ENCODE measurements at regions of chr6 and their contacts with region 1.

Region 1: DNA sequence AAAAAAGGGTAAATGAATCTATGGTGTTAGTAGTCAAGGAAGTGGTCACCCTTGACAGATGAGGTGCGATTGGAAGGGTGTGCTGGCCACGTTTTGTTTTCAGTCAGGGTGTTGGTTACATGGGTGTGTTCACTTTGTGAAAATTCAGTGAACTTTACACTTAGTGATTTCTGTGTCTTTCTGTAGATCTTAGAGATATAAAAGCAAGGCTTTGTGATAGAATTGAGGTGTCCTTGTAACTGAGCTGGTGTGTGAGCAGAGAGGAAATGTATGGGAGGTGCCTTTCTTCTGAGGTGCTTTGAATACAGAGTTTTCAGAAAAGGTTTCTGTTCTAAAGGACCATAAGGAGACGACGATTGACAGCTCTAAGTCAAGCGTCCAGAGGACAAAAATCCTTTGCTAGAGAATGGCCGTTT is 90.5 kb downstream of the SAMD3 start:
- DNase-seq: peak; percentile 24 to 92 (median 42)
- ATAC-seq: peak; percentile 85
- H3K4me3 ChIP-seq: peak overlapping the region; percentile 39
- H3K4me3 Mint-ChIP-seq: peak overlapping the region; percentile 71
- H3K27ac ChIP-seq: peak overlapping the region; percentile 64 to 75
- H3K27ac Mint-ChIP-seq: peak overlapping the region; percentile 90
- H3K4me1 ChIP-seq: peaks cover 36% of the 10 kb centered on the region
- H3K4me1 Mint-ChIP-seq: peaks cover 90% of the 10 kb centered on the region
- H3K27me3 ChIP-seq: no peaks in the 10 kb centered on the region
- H3K27me3 Mint-ChIP-seq: no peaks in the 10 kb centered on the region
- CTCF ChIP-seq: no peak

Region 2: GRCh38 chr6:130037207-130037811 is 95.0 kb before region 1 on chr6:
- CTCF ChIA-PET with region 1: no interaction called
- POLR2A ChIA-PET with region 1: no interaction called
- intact Hi-C with region 1: loop called in 1 of 2 experiments (anchors 10 kb)
- DNase-seq: peak in 3 of 14 experiments; percentile 36 to 60 (median 56)
- ATAC-seq: peak; percentile 73
- H3K4me3 ChIP-seq: no peak overlapping the region
- H3K4me3 Mint-ChIP-seq: no peak overlapping the region
- H3K27ac ChIP-seq: no peak overlapping the region
- H3K27ac Mint-ChIP-seq: no peak overlapping the region
- H3K4me1 ChIP-seq: peaks cover 11% of the 10 kb centered on the region
- H3K4me1 Mint-ChIP-seq: peaks cover 76% of the 10 kb centered on the region
- H3K27me3 ChIP-seq: no peaks in the 10 kb centered on the region
- H3K27me3 Mint-ChIP-seq: no peaks in the 10 kb centered on the region
- CTCF ChIP-seq: peak; percentile 74

Region 3: GRCh38 chr6:130065609-130066156 is 66.6 kb before region 1 on chr6:
- CTCF ChIA-PET with region 1: no interaction called
- POLR2A ChIA-PET with region 1: no interaction called
- intact Hi-C with region 1: no loop called
- DNase-seq: no peak
- ATAC-seq: no peak
- H3K4me3 ChIP-seq: no peak overlapping the region
- H3K4me3 Mint-ChIP-seq: no peak overlapping the region
- H3K27ac ChIP-seq: no peak overlapping the region
- H3K27ac Mint-ChIP-seq: no peak overlapping the region
- H3K4me1 ChIP-seq: peaks cover under 1% of the 10 kb centered on the region
- H3K4me1 Mint-ChIP-seq: peaks cover 3% of the 10 kb centered on the region
- H3K27me3 ChIP-seq: no peaks in the 10 kb centered on the region
- H3K27me3 Mint-ChIP-seq: no peaks in the 10 kb centered on the region
- CTCF ChIP-seq: no peak

Region 4: DNA sequence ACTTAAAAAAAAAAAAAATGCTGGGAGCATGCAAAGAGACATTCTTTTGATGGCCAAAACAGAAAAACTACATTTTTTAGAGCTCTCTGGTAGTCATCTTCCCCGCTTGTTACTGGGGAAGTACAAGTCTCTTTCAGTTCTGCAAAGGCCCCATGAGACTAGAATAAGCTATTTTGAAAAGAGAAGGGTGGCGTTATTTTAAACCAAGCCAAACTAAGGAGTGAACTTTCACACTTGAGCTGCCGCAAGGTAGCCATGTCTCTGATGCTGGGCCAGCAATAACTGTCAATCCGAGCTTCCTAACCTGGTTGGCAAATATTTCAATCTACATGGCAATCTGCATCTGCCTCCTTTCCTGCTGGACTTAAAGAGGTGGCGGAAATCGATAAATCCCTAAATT is 17.3 kb before region 1 on chr6:
- CTCF ChIA-PET with region 1: no interaction called
- POLR2A ChIA-PET with region 1: interaction called, 11 read pairs
- intact Hi-C with region 1: no loop called
- DNase-seq: no peak
- ATAC-seq: no peak
- H3K4me3 ChIP-seq: no peak overlapping the region
- H3K4me3 Mint-ChIP-seq: no peak overlapping the region
- H3K27ac ChIP-seq: no peak overlapping the region
- H3K27ac Mint-ChIP-seq: no peak overlapping the region
- H3K4me1 ChIP-seq: no peaks in the 10 kb centered on the region
- H3K4me1 Mint-ChIP-seq: peaks cover 33% of the 10 kb centered on the region
- H3K27me3 ChIP-seq: no peaks in the 10 kb centered on the region
- H3K27me3 Mint-ChIP-seq: no peaks in the 10 kb centered on the region
- CTCF ChIP-seq: no peak

Region 5: DNA sequence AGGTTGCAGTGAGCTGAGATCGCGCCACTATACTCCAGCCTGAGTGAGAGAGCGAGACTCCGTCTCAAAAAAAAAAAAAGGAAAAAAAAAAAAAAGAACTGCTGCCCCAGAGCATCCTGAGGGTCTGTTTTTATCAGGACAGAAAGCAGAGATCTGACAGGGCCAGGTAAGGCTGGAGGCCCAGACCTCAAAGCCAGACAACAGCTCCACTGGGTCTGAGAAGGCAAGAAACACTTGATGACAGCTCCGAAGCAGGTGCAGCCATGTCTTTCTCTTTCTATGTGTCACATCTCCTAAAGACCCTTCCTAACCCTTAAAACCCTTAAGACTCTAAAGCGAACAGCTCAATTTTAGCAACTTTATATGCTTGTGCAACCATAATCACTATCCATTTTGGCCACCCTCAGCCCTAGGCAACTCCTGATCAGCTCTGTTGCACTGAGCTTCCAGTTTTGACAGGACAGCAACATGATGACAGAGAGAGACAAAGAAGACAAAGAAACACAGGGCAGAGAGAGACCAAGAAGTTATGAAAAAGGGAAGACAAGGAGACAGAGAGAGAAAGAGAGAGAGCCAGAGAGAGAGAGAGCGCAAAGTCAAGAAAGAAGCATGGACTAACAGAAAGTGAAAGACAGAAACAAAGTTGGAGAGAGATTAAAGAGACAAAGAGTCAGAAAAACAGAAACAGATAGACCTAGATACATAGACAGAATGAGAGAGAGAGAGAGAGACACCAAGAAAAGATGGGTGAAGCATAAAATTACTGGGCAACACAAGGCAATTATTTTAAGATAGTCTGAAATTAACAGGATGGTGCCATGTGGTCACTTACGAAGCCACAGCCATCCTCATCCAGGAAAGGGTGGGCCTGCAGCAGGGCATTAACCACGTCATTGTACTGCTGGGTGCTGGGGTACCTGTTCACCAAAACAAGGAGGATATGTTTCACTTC is 51.3 kb after region 1 on chr6:
- CTCF ChIA-PET with region 1: no interaction called
- POLR2A ChIA-PET with region 1: interaction called, 10 read pairs
- intact Hi-C with region 1: no loop called
- DNase-seq: peak in 8 of 14 experiments; percentile 2 to 87 (median 48)
- ATAC-seq: peak; percentile 94
- H3K4me3 ChIP-seq: peak overlapping the region; percentile 11
- H3K4me3 Mint-ChIP-seq: peak overlapping the region; percentile 28
- H3K27ac ChIP-seq: peak overlapping the region; percentile 33 to 67
- H3K27ac Mint-ChIP-seq: peak overlapping the region; percentile 85
- H3K4me1 ChIP-seq: peaks cover 24% of the 10 kb centered on the region
- H3K4me1 Mint-ChIP-seq: peaks cover 62% of the 10 kb centered on the region
- H3K27me3 ChIP-seq: no peaks in the 10 kb centered on the region
- H3K27me3 Mint-ChIP-seq: no peaks in the 10 kb centered on the region
- CTCF ChIP-seq: no peak

Region 6: DNA sequence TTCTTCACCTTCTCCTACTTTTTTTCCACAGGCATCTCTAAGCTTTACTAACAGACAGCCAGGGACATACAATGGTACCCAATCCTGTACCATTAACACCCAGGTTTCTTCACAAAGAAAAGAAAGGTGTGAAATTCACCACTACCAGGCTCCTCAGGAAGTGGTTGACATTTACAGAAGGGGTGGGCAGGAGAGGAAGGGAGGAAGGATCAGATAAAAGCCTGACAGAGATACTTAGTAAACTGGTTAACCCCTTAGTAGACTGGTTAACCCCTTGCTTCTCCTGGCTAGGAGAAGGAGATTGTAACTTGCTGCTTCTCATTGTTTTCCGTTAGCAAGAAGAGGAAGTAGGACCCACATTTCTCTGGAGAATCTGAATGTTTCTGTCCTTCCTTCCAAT is 83.2 kb after region 1 on chr6:
- CTCF ChIA-PET with region 1: no interaction called
- POLR2A ChIA-PET with region 1: interaction called, 11 read pairs
- intact Hi-C with region 1: loop called (anchors 2 to 5 kb)
- DNase-seq: peak in 7 of 14 experiments; percentile 19 to 92 (median 43)
- ATAC-seq: peak; percentile 95
- H3K4me3 ChIP-seq: peak overlapping the region; percentile 54
- H3K4me3 Mint-ChIP-seq: peak overlapping the region; percentile 87
- H3K27ac ChIP-seq: peak overlapping the region in 1 of 2 donors; percentile 1
- H3K27ac Mint-ChIP-seq: peak overlapping the region; percentile 67
- H3K4me1 ChIP-seq: peaks cover 22% of the 10 kb centered on the region
- H3K4me1 Mint-ChIP-seq: peaks cover 84% of the 10 kb centered on the region
- H3K27me3 ChIP-seq: no peaks in the 10 kb centered on the region
- H3K27me3 Mint-ChIP-seq: no peaks in the 10 kb centered on the region
- CTCF ChIP-seq: no peak

Region 7: DNA sequence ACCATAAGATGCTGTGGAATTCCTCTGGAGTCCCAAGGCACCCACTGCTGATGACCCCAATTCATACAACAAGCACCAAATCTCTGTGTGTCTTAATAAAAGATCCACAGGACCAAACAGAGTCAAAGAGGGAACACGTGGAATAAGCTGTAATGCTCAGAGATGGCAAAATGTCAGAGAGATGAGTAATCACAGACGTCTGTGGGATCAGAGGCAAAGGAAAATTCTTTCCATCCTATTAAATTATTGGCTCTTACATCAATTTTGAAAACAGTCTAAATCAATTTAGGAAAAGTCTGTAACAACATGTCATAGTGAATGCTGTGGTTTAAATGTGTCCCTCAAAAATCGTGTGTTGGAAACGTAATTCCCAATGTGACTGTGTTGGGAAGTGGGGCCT is 107.9 kb after region 1 on chr6:
- CTCF ChIA-PET with region 1: no interaction called
- POLR2A ChIA-PET with region 1: no interaction called
- intact Hi-C with region 1: no loop called
- DNase-seq: no peak
- ATAC-seq: no peak
- H3K4me3 ChIP-seq: no peak overlapping the region
- H3K4me3 Mint-ChIP-seq: no peak overlapping the region
- H3K27ac ChIP-seq: no peak overlapping the region
- H3K27ac Mint-ChIP-seq: no peak overlapping the region
- H3K4me1 ChIP-seq: no peaks in the 10 kb centered on the region
- H3K4me1 Mint-ChIP-seq: no peaks in the 10 kb centered on the region
- H3K27me3 ChIP-seq: no peaks in the 10 kb centered on the region
- H3K27me3 Mint-ChIP-seq: no peaks in the 10 kb centered on the region
- CTCF ChIP-seq: no peak

Region 8: DNA sequence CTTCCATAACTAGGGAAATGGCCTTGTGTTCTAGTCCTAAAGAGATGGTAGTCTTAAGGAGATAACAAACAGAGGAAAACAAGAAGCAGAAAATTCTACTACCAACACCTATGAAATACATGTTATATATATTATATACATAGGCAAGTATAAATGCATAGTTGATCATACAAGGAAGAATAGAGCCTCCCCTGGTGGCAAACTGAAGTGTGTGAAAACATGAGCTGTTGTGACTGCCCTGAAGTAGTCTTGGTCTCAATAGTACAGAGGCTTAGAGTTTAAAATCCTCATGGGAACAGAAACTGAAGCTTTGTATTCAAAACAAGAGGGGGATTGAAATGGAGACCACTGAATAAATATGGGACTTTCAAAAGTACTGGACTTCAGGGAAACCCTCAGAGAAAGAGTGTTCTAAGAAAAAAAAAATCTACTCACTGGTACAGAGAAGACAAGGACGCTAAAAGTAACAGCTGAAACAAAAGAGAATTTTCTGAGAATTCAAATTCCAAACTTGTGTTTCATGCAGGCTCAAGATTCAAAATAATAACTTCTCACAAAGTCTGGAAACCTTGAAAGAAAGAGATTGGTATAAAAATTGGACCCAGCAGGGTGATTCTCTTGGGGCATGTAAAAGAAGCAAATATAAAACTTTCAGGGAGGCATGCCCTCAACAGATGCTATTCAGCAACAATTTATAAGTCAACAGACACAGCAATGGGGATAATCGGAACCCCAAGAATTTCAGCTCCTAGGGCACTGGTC is 150.1 kb after region 1 on chr6:
- CTCF ChIA-PET with region 1: no interaction called
- POLR2A ChIA-PET with region 1: interaction called, 4 read pairs
- intact Hi-C with region 1: loop called (anchors 1 to 5 kb)
- DNase-seq: peak in 6 of 14 experiments; percentile 11 to 73 (median 53)
- ATAC-seq: peak; percentile 62
- H3K4me3 ChIP-seq: no peak overlapping the region
- H3K4me3 Mint-ChIP-seq: no peak overlapping the region
- H3K27ac ChIP-seq: no peak overlapping the region
- H3K27ac Mint-ChIP-seq: no peak overlapping the region
- H3K4me1 ChIP-seq: peaks cover 6% of the 10 kb centered on the region
- H3K4me1 Mint-ChIP-seq: peaks cover 9% of the 10 kb centered on the region
- H3K27me3 ChIP-seq: no peaks in the 10 kb centered on the region
- H3K27me3 Mint-ChIP-seq: no peaks in the 10 kb centered on the region
- CTCF ChIP-seq: peak; percentile 57